ENCODE measurements at regions of chr11 and their contacts with region 1.

Region 1: GRCh38 chr11:88337181-88337986 is at the start of gene CTSC:
- DNase-seq: peak; percentile 92
- H3K4me3 ChIP-seq: peak within 1 kb of the TSS; percentile 95 to 96 (median 96)
- H3K27ac ChIP-seq: peak within 1 kb of the TSS; percentile 85
- H3K4me1 ChIP-seq: peaks cover 24% of the 10 kb centered on the region
- H3K27me3 ChIP-seq: no peaks in the 10 kb centered on the region
- CTCF ChIP-seq: peak in 1 of 2 donors; percentile 19
- total RNA-seq, gene CTSC: 192 to 609 TPM

Region 2: DNA sequence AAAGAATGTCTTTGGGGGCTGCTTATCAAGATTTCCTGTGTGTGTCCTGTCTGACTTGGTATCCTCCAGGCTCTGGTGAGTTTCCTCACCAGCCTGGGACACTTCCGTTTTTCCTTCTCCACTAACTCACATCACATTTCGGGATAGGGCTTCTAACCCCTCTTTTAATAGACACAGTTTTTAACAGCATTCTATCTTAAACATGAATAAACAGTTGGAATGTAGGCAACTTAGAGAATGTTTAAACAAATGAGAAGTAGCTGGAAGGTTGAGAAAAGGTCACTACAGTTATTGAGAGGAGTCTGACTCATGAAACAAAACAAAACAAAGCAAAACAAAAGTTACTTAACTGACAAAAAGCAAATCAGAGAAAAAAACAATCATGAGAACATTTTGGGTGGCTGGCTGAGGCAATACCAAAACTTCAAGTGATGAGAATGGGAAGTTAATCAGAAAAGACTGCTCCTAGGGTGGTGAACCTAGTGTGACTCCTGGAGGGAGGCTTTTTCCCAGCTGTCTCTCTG is 64.9 kb after region 1 on chr11:
- CTCF ChIA-PET with region 1: no interaction called
- dilution Hi-C with region 1: no loop called
- in situ Hi-C with region 1: loop called in 1 of 2 experiments (anchors 10 kb)
- intact Hi-C with region 1: no loop called
- DNase-seq: peak; percentile 90
- H3K4me3 ChIP-seq: no peak overlapping the region
- H3K27ac ChIP-seq: no peak overlapping the region
- H3K4me1 ChIP-seq: peaks cover 41% of the 10 kb centered on the region
- H3K27me3 ChIP-seq: no peaks in the 10 kb centered on the region
- CTCF ChIP-seq: no peak

Region 3: DNA sequence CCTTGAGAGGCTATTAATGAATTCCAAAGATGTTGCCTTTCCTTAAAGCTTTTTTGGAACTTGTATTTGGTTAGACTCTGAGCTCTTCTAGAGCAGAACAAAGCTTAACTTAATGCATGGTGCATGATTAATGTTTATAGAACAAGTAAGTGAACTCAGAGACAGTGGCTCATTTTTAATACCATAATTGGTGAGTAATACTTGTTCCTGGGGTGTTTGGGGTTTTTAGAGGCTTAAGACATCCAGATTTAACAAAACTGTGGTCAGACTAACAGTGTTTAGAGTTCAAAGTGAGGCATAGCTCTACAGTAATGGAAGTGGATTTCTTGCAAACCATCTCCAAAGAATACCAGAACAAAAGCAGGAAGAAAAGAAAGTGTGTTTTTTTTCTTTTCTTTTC is 73.9 kb after region 1 on chr11:
- CTCF ChIA-PET with region 1: no interaction called
- dilution Hi-C with region 1: no loop called
- in situ Hi-C with region 1: loop called in 1 of 2 experiments (anchors 10 kb)
- intact Hi-C with region 1: loop called (anchors 2 kb)
- DNase-seq: peak; percentile 94
- H3K4me3 ChIP-seq: no peak overlapping the region
- H3K27ac ChIP-seq: peak overlapping the region; percentile 87
- H3K4me1 ChIP-seq: peaks cover 54% of the 10 kb centered on the region
- H3K27me3 ChIP-seq: no peaks in the 10 kb centered on the region
- CTCF ChIP-seq: no peak

Region 4: GRCh38 chr11:88421530-88421929 is 84.1 kb after region 1 on chr11:
- CTCF ChIA-PET with region 1: no interaction called
- dilution Hi-C with region 1: no loop called
- in situ Hi-C with region 1: no loop called
- intact Hi-C with region 1: loop called (anchors 1 kb)
- DNase-seq: peak; percentile 82
- H3K4me3 ChIP-seq: no peak overlapping the region
- H3K27ac ChIP-seq: peak overlapping the region; percentile 95
- H3K4me1 ChIP-seq: peaks cover 45% of the 10 kb centered on the region
- H3K27me3 ChIP-seq: no peaks in the 10 kb centered on the region
- CTCF ChIP-seq: no peak

Region 5: DNA sequence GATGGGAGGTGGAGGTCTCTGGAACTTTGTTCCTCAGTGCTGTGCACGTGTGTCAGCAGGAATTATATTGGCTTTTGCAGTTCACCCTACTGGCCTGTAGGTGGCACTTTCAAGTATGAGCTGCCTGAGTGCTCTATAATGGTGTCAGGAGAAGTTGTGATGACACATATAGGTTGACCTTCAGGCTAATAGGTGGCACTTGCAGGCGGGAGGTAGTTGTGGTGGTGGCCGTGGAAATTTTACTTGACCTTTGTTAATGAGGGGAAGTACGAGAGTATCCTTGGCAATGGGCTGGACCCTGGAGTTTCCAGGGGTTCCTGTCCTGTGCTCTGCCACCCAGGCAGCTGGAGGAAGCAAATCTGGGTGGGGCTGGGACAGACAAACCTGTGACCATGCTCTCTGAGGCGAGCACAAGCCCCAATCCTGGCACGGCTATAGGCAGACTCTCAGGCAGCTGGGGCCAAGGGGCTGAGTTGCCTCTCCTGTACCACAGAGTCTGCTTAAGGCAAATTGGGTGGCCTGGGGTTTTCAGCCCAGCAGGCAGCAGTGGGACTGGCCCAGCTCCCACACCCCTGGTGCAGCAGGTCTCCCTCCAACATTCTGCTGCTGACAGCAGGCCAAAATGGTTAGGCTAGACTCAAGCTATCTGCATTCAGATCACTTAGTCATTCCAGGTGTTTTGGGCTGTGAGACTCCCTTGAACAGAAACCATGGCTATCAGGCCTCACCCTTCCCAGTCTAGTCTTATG is 147.7 kb after region 1 on chr11:
- CTCF ChIA-PET with region 1: interaction called, 3 read pairs
- dilution Hi-C with region 1: no loop called
- in situ Hi-C with region 1: no loop called
- intact Hi-C with region 1: loop called (anchors 5 kb)
- DNase-seq: peak; percentile 85
- H3K4me3 ChIP-seq: no peak overlapping the region
- H3K27ac ChIP-seq: no peak overlapping the region
- H3K4me1 ChIP-seq: peaks cover 29% of the 10 kb centered on the region
- H3K27me3 ChIP-seq: no peaks in the 10 kb centered on the region
- CTCF ChIP-seq: peak; percentile 68 to 82

Region 6: GRCh38 chr11:88535916-88536547 is 198.6 kb after region 1 on chr11:
- CTCF ChIA-PET with region 1: no interaction called
- dilution Hi-C with region 1: no loop called
- in situ Hi-C with region 1: loop called in 1 of 2 experiments (anchors 10 kb)
- intact Hi-C with region 1: loop called (anchors 1 kb)
- DNase-seq: peak; percentile 90
- H3K4me3 ChIP-seq: no peak overlapping the region
- H3K27ac ChIP-seq: peak overlapping the region; percentile 92
- H3K4me1 ChIP-seq: peaks cover 45% of the 10 kb centered on the region
- H3K27me3 ChIP-seq: no peaks in the 10 kb centered on the region
- CTCF ChIP-seq: no peak

Measured in mammary epithelial cell (primary cell).